ENCODE measurements at regions of chr20 and their contacts with region 1.

Region 1: DNA sequence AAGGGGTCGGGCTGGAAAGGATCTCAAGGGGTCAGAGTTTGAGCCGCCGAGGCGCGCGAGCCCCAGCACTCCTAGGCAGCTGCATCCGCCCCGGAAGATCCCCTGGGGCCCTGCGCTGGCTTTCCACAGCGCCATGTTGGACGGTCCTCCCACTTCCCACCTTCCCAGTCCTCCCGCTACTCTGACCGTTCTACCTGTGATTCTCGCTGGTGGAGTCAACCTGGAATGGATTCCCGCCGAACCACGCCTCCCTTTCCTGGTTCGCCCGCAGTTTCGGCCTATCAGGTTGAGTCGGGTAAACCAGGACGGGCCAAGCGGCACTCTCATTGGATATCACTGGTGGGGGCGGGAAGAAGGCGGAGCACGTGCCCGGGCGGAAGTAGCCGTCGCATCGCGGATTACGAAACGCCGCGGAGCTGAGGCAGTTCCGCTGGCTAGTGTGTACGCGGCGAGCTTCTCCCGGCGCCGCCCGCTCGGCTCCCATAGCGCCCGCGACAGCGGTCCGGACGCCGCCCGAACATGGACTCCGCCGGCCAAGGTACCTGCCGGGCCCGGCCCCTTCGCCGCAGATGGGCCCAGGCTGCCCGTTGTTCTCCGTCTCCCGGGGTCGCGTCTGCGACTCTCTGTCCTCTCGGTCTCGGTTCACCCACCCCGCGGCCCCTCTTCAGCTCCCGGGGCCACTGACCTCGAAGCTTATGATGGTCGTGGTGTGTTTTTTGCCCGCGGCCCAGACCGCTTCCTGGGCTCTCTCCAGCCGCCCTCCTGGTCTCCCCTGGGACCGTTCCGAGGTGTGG is at the start of gene TPD52L2:
- DNase-seq: peak; percentile 99
- H3K4me3 Mint-ChIP-seq: peak within 1 kb of the TSS; percentile 98
- H3K27ac Mint-ChIP-seq: peak within 1 kb of the TSS; percentile 96
- H3K4me1 Mint-ChIP-seq: peaks cover 9% of the 10 kb centered on the region
- H3K27me3 Mint-ChIP-seq: no peaks in the 10 kb centered on the region
- CTCF ChIP-seq: no peak
- total RNA-seq, gene TPD52L2: 174 and 175 TPM in 2 replicates

Region 2: GRCh38 chr20:63520504-63520933 is 344.5 kb before region 1 on chr20 and contains the start of gene PPDPF:
- CTCF ChIA-PET with region 1: no interaction called
- POLR2A ChIA-PET with region 1: interaction called, 18 read pairs
- intact Hi-C with region 1: no loop called
- DNase-seq: peak; percentile 75
- H3K4me3 Mint-ChIP-seq: peak within 1 kb of the TSS; percentile 83
- H3K27ac Mint-ChIP-seq: peak within 1 kb of the TSS; percentile 42
- H3K4me1 Mint-ChIP-seq: no peaks in the 10 kb centered on the region
- H3K27me3 Mint-ChIP-seq: no peaks in the 10 kb centered on the region
- CTCF ChIP-seq: no peak
- total RNA-seq, gene PPDPF: 315 and 355 TPM in 2 replicates

Region 3: DNA sequence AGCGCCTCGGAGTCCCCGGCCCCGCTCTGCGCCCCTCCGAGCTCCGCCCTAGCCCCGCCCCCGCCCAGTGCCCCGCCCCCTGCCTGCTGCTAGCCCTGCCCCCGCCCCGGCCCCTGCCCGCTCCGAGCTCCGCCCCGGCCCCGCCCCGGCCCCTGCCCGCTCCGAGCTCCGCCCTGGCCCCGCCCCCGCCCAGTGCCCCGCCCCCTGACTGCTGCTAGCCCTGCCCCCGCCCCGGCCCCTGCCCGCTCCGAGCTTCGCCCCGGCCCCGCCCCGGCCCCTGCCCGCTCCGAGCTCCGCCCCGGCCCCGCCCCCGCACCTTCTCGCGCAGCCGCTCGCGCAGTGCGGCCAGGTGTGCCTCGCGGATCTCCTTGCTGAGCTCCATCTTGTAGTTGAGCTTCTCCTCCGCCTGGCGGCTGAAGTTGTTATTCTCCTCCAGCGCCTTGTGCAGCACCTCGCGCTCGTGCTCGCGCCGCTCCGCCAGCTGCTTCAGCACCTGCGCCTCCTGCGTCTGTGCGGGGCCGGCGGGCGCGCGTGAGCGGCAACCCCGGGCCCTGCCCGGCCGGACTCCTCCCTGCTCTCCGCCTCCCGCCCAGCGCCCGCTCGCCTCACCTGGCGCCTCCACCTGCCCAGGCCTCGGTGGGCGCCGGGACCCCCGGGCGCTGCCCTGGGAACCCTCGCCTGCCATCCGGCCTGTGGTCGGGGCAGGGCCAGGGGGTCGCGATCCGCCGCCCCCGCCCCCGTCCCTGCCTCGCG is 223.1 kb before region 1 on chr20:
- CTCF ChIA-PET with region 1: interaction called, 3 read pairs
- POLR2A ChIA-PET with region 1: interaction called, 16 read pairs
- intact Hi-C with region 1: no loop called
- DNase-seq: peak; percentile 82
- H3K4me3 Mint-ChIP-seq: peak overlapping the region; percentile 74
- H3K27ac Mint-ChIP-seq: no peak overlapping the region
- H3K4me1 Mint-ChIP-seq: peaks cover 6% of the 10 kb centered on the region
- H3K27me3 Mint-ChIP-seq: no peaks in the 10 kb centered on the region
- CTCF ChIP-seq: peak; percentile 39

Region 4: GRCh38 chr20:63707549-63708300 is 157.3 kb before region 1 on chr20 and contains the starts of genes ARFRP1 and ZGPAT:
- CTCF ChIA-PET with region 1: interaction called, 6 read pairs
- POLR2A ChIA-PET with region 1: interaction called, 58 read pairs
- intact Hi-C with region 1: loop called (anchors 1 kb)
- DNase-seq: peak; percentile 82
- H3K4me3 Mint-ChIP-seq: peak within 1 kb of the TSS; percentile 86
- H3K27ac Mint-ChIP-seq: peak within 1 kb of the TSS; percentile 61
- H3K4me1 Mint-ChIP-seq: peaks cover 9% of the 10 kb centered on the region
- H3K27me3 Mint-ChIP-seq: no peaks in the 10 kb centered on the region
- CTCF ChIP-seq: no peak
- total RNA-seq, gene ARFRP1: 60.1 and 65.4 TPM in 2 replicates
- total RNA-seq, gene ZGPAT: 19.5 and 22.2 TPM in 2 replicates

Region 5: DNA sequence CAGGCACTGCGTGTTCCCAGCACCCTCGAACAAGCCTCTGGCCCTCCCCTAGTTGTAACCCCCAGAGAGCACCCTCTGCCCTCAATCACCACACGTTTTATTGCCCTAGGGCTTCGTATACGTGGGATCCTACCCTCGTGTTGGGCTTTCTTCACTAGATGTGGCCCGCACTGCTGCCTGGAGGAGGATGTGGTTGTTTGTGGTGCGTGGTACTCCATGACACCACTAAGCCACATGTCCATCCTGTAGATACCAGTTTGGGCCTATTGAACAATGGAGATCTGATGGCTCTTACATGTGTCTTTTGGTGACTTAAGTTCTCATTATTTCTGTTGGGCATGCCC is 108.4 kb before region 1 on chr20:
- CTCF ChIA-PET with region 1: no interaction called
- POLR2A ChIA-PET with region 1: no interaction called
- intact Hi-C with region 1: no loop called
- DNase-seq: no peak
- H3K4me3 Mint-ChIP-seq: no peak overlapping the region
- H3K27ac Mint-ChIP-seq: no peak overlapping the region
- H3K4me1 Mint-ChIP-seq: no peaks in the 10 kb centered on the region
- H3K27me3 Mint-ChIP-seq: peaks cover 31% of the 10 kb centered on the region
- CTCF ChIP-seq: no peak

Region 6: DNA sequence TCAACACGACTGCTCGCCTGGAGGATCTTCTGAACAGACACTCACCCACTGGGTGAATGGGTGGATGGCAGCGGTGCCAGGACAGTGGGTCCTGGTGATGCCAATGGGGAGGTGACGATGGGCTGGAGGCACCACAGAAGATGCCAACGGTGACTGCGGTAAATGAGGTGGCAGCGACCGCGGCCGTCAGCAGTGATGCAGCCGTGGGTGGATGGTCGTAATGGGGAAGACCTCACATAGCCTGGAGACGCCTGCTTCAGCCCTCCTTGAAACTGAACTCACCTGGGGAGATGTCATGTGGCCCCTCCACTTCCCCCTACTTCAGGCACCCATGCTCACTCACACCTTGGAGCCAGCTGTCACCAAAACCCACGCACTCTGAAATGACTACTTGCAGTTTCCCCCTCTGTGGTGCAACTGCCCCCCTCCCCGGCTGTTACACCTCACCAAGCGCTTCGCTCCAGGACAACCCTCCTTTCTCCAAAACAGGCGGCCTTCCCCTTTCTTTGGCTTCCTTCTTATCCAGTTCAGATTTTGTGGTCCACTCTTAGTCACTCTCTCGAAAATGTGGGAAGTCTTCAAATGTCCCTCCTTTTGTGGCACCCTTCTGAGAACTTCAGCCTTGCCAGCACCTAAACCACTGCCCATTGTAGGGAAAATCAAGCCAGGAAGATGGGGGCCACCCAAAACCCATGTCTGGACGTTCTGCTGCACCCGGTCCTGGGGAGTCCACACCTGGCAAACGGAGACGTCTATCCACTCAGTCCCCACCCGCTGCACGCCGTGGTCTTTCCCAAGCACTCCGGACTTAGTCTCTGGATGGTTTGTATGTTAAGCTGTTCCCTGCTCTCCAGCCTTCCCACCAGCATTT is 14.1 kb before region 1 on chr20:
- CTCF ChIA-PET with region 1: interaction called, 4 read pairs
- POLR2A ChIA-PET with region 1: interaction called, 22 read pairs
- intact Hi-C with region 1: no loop called
- DNase-seq: no peak
- H3K4me3 Mint-ChIP-seq: no peak overlapping the region
- H3K27ac Mint-ChIP-seq: peak overlapping the region; percentile 24
- H3K4me1 Mint-ChIP-seq: no peaks in the 10 kb centered on the region
- H3K27me3 Mint-ChIP-seq: peaks cover 13% of the 10 kb centered on the region
- CTCF ChIP-seq: no peak

Region 7: GRCh38 chr20:63911176-63911575 is 46.1 kb after region 1 on chr20:
- CTCF ChIA-PET with region 1: interaction called, 4 read pairs
- POLR2A ChIA-PET with region 1: interaction called, 19 read pairs
- intact Hi-C with region 1: no loop called
- DNase-seq: peak; percentile 56
- H3K4me3 Mint-ChIP-seq: peak overlapping the region; percentile 28
- H3K27ac Mint-ChIP-seq: peak overlapping the region; percentile 78
- H3K4me1 Mint-ChIP-seq: peaks cover 28% of the 10 kb centered on the region
- H3K27me3 Mint-ChIP-seq: no peaks in the 10 kb centered on the region
- CTCF ChIP-seq: no peak

Measured in MCF 10A (cell line).